Vagina (tissue), 2 donors: ENCODE measurements at regions of chrX and their contacts with region 1.

Region 1: GRCh38 chrX:150772150-150772970 is 79.2 kb downstream of the MTMR1 start:
- DNase-seq: no peak
- H3K4me3 ChIP-seq: no peak overlapping the region
- H3K27ac ChIP-seq: no peak overlapping the region
- H3K4me1 ChIP-seq: peaks cover 4% of the 10 kb centered on the region
- H3K27me3 ChIP-seq: no peaks in the 10 kb centered on the region
- CTCF ChIP-seq: peak; percentile 52 to 72 (median 53)
- POLR2A ChIP-seq: no peak

Region 2: GRCh38 chrX:150635952-150636351 is 136.4 kb before region 1 on chrX:
- intact Hi-C with region 1: no loop called
- DNase-seq: no peak
- H3K4me3 ChIP-seq: no peak overlapping the region
- H3K27ac ChIP-seq: no peak overlapping the region
- H3K4me1 ChIP-seq: no peaks in the 10 kb centered on the region
- H3K27me3 ChIP-seq: no peaks in the 10 kb centered on the region
- CTCF ChIP-seq: no peak
- POLR2A ChIP-seq: no peak

Region 3: DNA sequence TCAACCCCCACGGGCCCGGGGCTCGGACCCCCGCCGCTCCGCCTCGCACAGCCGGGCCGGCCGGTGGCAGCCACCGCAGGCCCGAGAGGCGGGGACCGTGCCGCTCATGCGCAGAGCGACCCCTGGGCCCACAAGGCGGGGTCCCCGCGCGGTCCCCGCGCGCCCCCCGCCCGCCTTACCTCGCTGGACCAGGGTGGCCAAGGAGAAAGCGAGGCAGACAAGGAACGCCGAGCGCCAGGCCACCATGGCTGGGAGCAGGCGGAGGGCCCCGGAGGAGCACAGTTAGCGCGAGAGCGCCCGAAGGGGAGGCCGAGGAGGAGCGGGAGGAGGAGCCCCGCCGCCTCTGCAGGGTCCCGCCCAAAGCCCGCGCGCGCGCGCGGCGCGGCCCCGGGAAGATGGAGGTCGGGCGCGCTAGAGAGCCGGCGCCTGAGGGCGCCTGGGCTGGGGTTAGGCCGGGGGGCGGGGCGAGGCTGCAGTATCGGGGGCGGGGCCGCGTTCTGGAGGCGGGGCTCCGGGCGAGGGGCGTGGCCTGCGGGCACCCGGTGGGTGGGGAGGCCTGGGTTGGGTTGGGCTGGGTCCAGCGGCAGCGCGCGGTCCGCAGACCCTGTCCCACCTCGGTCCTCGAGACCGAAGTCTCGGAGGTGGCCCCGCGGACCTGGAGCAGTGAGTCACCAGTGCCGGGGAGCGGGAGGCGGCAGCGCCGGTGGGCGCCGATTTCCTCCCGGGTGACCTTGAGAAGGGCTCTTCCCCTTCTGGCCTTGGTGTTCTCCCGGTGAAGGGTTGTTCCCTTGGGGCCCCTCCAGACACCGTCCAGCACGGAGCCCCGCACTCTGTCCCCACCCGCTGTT is 126.2 kb after region 1 on chrX and contains the start of gene CD99L2:
- intact Hi-C with region 1: no loop called
- DNase-seq: no peak
- H3K4me3 ChIP-seq: peak within 1 kb of the TSS; percentile 54 to 69
- H3K27ac ChIP-seq: peak within 1 kb of the TSS; percentile 68
- H3K4me1 ChIP-seq: no peaks in the 10 kb centered on the region
- H3K27me3 ChIP-seq: no peaks in the 10 kb centered on the region
- CTCF ChIP-seq: no peak
- POLR2A ChIP-seq: no peak
- total RNA-seq, gene CD99L2: 23.8 TPM

Region 4: GRCh38 chrX:151082076-151082948 is 310.0 kb after region 1 on chrX:
- intact Hi-C with region 1: loop called (anchors 5 kb)
- DNase-seq: no peak
- H3K4me3 ChIP-seq: peak overlapping the region in 1 of 2 donors; percentile 31
- H3K27ac ChIP-seq: no peak overlapping the region
- H3K4me1 ChIP-seq: peaks cover 5% of the 10 kb centered on the region
- H3K27me3 ChIP-seq: no peaks in the 10 kb centered on the region
- CTCF ChIP-seq: peak in 2 of 3 experiments; percentile 67 to 76
- POLR2A ChIP-seq: no peak